ENCODE measurements at regions of chr1 and their contacts with region 1.

Region 1: GRCh38 chr1:23591460-23592208 is 32.3 kb upstream of the ID3 start:
- DNase-seq: no peak
- H3K4me3 ChIP-seq: no peak overlapping the region
- CTCF ChIP-seq: no peak
- POLR2A ChIP-seq: no peak

Region 2: GRCh38 chr1:23559136-23559984 is 32.3 kb before region 1 on chr1 and contains the start of gene ID3:
- intact Hi-C with region 1: loop called (anchors 5 kb)
- DNase-seq: peak; percentile 97 to 100
- H3K4me3 ChIP-seq: peak within 1 kb of the TSS; percentile 77
- CTCF ChIP-seq: no peak
- POLR2A ChIP-seq: peak in 1 of 2 donors; percentile 62
- total RNA-seq, gene ID3: 81.2 to 209 (median 122) TPM